ENCODE measurements at regions of chr16 and their contacts with region 1.

Region 1: GRCh38 chr16:19167710-19168370 is at the start of gene SYT17:
- DNase-seq: peak; percentile 57
- H3K4me3 ChIP-seq: no peak within 1 kb of the TSS
- H3K27ac ChIP-seq: no peak within 1 kb of the TSS
- H3K4me1 ChIP-seq: no peaks in the 10 kb centered on the region
- CTCF ChIP-seq: peak; percentile 71
- total RNA-seq, gene SYT17: 7.1 and 10.3 TPM in 2 replicates

Region 2: DNA sequence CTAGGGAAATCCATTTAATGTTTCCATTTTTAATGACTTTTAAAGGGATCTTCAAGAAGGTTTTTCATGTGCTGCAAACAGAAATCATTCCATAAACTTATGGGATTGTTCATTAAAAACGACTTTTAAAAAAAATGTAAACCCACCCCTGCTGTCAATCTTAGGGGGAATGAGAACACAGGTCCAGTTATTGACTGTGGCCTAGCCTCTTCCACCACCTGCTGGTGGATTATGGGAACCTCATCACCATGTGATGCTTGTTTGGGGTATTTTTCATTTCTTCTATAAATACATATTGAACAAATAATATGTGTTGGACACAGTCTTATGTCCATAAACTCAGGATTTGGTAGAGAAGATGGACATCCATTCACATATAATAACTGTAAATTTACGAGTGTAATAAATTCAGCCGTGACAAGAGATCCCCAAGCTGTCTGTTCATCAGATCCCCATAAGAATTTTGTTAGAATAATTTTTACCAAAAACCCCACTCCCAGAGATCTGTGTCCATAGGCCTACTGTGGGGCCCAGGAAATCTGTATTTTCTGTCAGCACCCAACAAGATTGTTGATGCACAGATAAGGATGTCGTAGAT is 207.8 kb after region 1 on chr16:
- CTCF ChIA-PET with region 1: no interaction called
- POLR2A ChIA-PET with region 1: no interaction called
- intact Hi-C with region 1: loop called (anchors 5 kb)
- DNase-seq: peak; percentile 78
- H3K4me3 ChIP-seq: no peak overlapping the region
- H3K27ac ChIP-seq: no peak overlapping the region
- H3K4me1 ChIP-seq: peaks cover 12% of the 10 kb centered on the region
- CTCF ChIP-seq: peak; percentile 97